ENCODE measurements at regions of chr2 and their contacts with region 1.

Region 1: GRCh38 chr2:64052468-64053241 is 33.4 kb upstream of the VPS54 start:
- DNase-seq: no peak
- ATAC-seq: no peak
- H3K4me3 ChIP-seq: no peak overlapping the region
- H3K27ac ChIP-seq: no peak overlapping the region
- H3K4me1 ChIP-seq: peaks cover 0 to 6% of the 10 kb centered on the region in 2 experiments; a peak in 1 of 4 replicates
- H3K27me3 ChIP-seq: no peaks in the 10 kb centered on the region
- CTCF ChIP-seq: no peak
- POLR2A ChIP-seq: no peak
- RAD21 ChIP-seq: no peak

Region 2: DNA sequence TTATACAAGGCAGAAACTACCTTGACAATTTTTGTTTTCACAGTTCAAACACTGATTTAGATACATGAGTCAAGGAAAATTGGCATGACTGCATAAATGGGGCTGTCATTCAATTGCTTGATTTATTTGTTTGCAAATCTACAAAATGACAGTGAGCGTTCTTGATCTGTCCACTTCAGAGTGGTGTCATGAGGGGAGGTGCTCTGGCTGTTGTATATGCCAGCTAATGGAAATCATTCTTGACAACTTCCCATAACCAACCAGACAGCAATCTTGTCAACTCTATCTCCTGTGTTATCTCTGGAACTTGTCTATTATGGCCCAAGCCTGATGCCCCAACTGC is 331.6 kb before region 1 on chr2:
- CTCF ChIA-PET with region 1: no interaction called
- POLR2A ChIA-PET with region 1: no interaction called
- RAD21 ChIA-PET with region 1: no interaction called
- intact Hi-C with region 1: no loop called
- DNase-seq: no peak
- ATAC-seq: no peak
- H3K4me3 ChIP-seq: no peak overlapping the region
- H3K27ac ChIP-seq: no peak overlapping the region
- H3K4me1 ChIP-seq: no peaks in the 10 kb centered on the region
- H3K27me3 ChIP-seq: no peaks in the 10 kb centered on the region
- CTCF ChIP-seq: no peak
- POLR2A ChIP-seq: no peak
- RAD21 ChIP-seq: no peak

Region 3: GRCh38 chr2:64311948-64312621 is 259.4 kb after region 1 on chr2:
- CTCF ChIA-PET with region 1: interaction called, 55 read pairs
- POLR2A ChIA-PET with region 1: interaction called, 5 read pairs
- RAD21 ChIA-PET with region 1: interaction called, 12 read pairs
- intact Hi-C with region 1: loop called (anchors 1 kb)
- DNase-seq: peak; percentile 71
- ATAC-seq: peak; percentile 97
- H3K4me3 ChIP-seq: peak overlapping the region in 1 of 2 experiments; percentile 6; a peak in 1 of 4 replicates
- H3K27ac ChIP-seq: no peak overlapping the region
- H3K4me1 ChIP-seq: peaks cover 11 to 13% of the 10 kb centered on the region in 2 experiments
- H3K27me3 ChIP-seq: no peaks in the 10 kb centered on the region
- CTCF ChIP-seq: peak; percentile 46 to 52 (median 52); a peak in 5 of 6 replicates
- POLR2A ChIP-seq: no peak
- RAD21 ChIP-seq: peak; percentile 78

Region 4: DNA sequence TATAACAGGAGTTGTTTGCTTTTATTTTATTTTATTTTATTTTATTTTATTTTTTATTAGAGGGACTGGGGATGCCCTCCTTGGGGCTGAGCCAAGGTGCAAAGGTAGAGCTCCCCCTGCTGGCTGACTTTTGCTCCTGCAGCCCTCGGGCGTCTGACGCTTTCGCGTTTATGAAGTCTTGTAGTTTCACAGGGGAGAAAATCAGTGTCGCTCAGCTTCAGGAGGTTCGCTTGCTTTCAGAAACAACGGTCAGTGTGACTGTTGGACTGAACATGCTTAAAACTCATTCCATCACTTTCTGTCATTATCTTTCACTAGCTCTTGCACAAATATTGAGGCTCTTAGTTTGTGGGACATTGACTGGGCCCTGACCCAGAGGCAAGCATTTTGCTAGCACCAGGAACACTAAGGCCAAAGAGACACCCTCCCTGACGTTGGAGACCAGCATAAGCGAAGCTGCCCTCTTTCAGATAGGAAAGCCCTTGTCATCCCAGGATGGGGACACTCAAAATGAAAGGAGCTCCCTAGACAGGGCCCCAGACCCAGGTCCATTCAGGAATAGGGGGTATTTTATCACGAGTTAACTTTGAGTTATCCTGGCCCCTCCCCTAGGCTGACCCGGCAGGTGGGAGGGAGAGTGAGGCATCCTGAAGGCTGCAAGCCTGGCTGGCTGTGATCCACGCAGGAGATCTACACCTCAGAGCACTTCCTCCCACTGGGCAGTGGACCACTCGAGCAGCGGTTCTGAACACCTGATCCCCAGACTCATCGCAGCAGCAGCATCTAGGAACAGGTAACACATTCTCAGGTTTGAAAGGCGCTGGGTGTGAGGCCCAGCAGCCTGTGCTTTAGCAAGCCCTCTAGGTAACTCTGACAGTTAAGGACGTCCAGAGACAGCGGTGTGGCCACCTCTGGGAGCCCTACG is 435.7 kb after region 1 on chr2:
- CTCF ChIA-PET with region 1: interaction called, 13 read pairs
- POLR2A ChIA-PET with region 1: no interaction called
- RAD21 ChIA-PET with region 1: interaction called in 1 of 2 experiments, 3 read pairs
- intact Hi-C with region 1: loop called (anchors 2 kb)
- DNase-seq: peak; percentile 55
- ATAC-seq: peak; percentile 89
- H3K4me3 ChIP-seq: no peak overlapping the region
- H3K27ac ChIP-seq: no peak overlapping the region
- H3K4me1 ChIP-seq: peaks cover 0 to 4% of the 10 kb centered on the region in 2 experiments; a peak in 1 of 4 replicates
- H3K27me3 ChIP-seq: no peaks in the 10 kb centered on the region; the same call in 1 of the 2 replicates
- CTCF ChIP-seq: peak; percentile 81 to 91 (median 89)
- POLR2A ChIP-seq: no peak
- RAD21 ChIP-seq: peak; percentile 89

Region 5: GRCh38 chr2:64562148-64562784 is 509.6 kb after region 1 on chr2:
- CTCF ChIA-PET with region 1: no interaction called
- POLR2A ChIA-PET with region 1: no interaction called
- RAD21 ChIA-PET with region 1: no interaction called
- intact Hi-C with region 1: loop called (anchors 2 kb)
- DNase-seq: peak; percentile 10
- ATAC-seq: peak; percentile 46; the same call in 1 of the 2 replicates
- H3K4me3 ChIP-seq: no peak overlapping the region
- H3K27ac ChIP-seq: no peak overlapping the region
- H3K4me1 ChIP-seq: no peaks in the 10 kb centered on the region
- H3K27me3 ChIP-seq: no peaks in the 10 kb centered on the region
- CTCF ChIP-seq: peak; percentile 22 to 59 (median 39); a peak in 4 of 6 replicates
- POLR2A ChIP-seq: no peak
- RAD21 ChIP-seq: peak; percentile 60

Measured in HCT116 (cell line).